Aorta (tissue), 5 donors: ENCODE measurements at regions of chr21 and their contacts with region 1.

Region 1: GRCh38 chr21:43718872-43719747 is at the start of gene PDXK:
- DNase-seq: peak; percentile 91 to 95
- ATAC-seq: peak; percentile 94
- H3K4me3 ChIP-seq: peak within 1 kb of the TSS; percentile 77 to 92
- H3K27ac ChIP-seq: peak within 1 kb of the TSS; percentile 66 to 70
- H3K4me1 ChIP-seq: no peaks in the 10 kb centered on the region
- H3K27me3 ChIP-seq: no peaks in the 10 kb centered on the region
- total RNA-seq, gene PDXK: 90.7 to 94.4 TPM

Region 2: DNA sequence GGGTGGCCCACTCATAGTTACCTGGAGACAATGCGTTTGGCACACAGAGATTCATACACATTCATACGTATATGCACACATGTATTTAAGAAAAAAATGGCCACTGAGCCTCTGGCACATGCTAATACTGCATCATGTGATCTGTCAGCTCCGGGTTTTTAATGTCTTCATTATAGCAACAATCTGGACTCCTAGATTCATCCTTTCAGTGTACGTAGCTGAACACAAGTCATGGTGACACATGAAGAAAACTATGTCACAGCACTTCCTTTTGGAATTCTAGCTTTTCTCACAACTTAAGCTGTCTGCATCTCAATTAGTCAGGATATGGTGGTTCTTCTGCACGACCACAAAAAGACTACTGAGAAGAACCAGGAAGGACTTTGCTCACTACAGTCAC is 84.5 kb before region 1 on chr21:
- intact Hi-C with region 1: no loop called
- DNase-seq: no peak
- ATAC-seq: no peak
- H3K4me3 ChIP-seq: no peak overlapping the region
- H3K27ac ChIP-seq: no peak overlapping the region
- H3K4me1 ChIP-seq: no peaks in the 10 kb centered on the region
- H3K27me3 ChIP-seq: no peaks in the 10 kb centered on the region

Region 3: DNA sequence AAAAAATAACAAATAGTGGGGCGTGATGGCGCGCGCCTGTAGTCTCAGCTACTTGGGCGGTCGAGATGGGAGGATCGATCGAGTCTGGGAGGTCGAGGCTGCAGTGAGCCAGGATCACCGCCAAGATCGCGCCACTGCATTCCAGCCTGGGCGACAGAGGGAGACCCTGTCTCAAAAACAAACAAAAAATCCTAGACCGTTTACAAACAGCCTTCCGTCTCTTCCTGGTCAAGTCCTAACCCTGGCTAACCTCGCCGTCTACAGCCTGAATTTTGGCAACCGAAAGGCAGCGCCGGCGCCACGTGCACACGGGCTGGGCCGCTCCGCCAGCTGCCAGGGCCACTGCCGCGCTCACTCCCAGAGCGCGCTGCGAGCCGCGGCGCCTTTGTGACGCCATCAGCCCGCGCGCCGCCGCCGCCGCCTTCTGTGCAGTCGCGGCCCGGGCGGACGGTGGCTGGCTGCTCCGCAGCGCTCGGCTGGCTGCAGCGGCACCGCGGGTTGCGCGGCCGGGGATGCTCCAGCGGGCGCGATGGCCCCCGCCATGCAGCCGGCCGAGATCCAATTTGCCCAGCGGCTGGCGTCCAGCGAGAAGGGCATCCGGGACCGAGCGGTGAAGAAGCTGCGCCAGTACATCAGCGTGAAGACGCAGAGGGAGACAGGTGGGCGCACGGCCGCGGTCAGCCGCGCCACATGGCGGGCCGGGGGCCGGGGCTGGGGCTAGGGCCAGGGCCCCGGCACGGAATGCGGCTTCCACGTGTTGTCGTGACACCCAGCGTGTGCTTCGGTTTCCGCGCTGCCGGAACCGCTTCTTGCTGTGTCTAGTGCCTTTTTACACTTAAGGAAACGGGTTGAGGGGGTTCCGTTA is 59.7 kb before region 1 on chr21 and contains the starts of genes HSF2BP and RRP1B:
- intact Hi-C with region 1: loop called in 1 of 2 experiments (anchors 2 kb)
- DNase-seq: peak; percentile 86 to 93
- ATAC-seq: peak; percentile 95
- H3K4me3 ChIP-seq: peak within 1 kb of the TSS; percentile 79 to 88
- H3K27ac ChIP-seq: peak within 1 kb of the TSS; percentile 62 to 64
- H3K4me1 ChIP-seq: no peaks in the 10 kb centered on the region
- H3K27me3 ChIP-seq: no peaks in the 10 kb centered on the region
- total RNA-seq, gene HSF2BP: 0.51 TPM in 1 of 2 donors, not detected in the other
- total RNA-seq, gene RRP1B: 15.9 to 16.4 TPM

Region 4: DNA sequence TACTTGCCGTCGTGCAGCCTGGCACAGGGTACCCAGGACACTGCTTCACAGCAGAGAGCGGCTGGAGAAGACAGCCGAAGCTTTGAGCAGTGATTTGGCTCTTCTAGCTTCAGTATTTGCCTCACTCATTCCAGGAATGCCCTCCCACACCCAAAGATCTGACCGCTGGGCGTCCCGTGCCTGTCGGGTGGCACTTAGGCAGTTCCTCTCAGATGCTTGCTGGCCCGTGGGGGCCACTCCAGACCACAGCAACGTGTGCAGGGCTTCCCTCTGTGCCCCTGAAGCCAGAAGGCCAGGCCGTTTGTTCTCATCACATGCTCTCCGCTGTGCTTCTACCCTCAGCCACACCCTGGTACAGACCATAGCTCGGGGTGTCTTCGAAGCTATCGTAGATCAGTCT is 42.7 kb before region 1 on chr21:
- intact Hi-C with region 1: no loop called
- DNase-seq: no peak
- ATAC-seq: no peak
- H3K4me3 ChIP-seq: no peak overlapping the region
- H3K27ac ChIP-seq: no peak overlapping the region
- H3K4me1 ChIP-seq: no peaks in the 10 kb centered on the region
- H3K27me3 ChIP-seq: no peaks in the 10 kb centered on the region

Region 5: DNA sequence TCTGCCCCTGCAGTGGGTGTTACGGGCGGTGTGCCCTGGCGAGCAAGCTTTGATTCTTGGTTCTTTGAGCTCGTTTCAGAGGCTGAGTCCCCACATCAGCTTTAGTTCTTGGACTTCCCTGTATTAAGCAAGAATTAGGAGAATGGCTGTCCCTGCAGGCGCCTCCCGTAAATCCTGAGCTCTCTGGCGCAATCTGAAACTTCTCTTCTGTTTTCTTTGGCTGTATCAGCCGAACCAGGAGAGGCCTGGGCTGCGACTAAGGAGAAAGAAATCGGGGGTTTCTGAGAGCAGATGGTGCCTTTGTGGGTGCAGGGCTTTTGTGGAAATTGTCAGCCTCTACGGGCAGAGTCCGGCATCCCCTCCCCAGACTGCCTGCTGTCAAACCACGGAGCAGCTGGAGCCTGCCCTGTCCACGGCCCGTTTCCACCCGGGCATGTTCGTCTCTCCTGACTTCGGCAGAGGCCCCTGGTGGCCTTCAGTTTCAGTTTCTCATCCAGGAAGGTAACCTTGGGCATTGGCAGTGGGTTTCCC is 39.1 kb after region 1 on chr21:
- intact Hi-C with region 1: loop called in 1 of 2 experiments (anchors 5 kb)
- DNase-seq: no peak
- ATAC-seq: peak; percentile 63
- H3K4me3 ChIP-seq: no peak overlapping the region
- H3K27ac ChIP-seq: peak overlapping the region in 1 of 2 donors; percentile 68
- H3K4me1 ChIP-seq: no peaks in the 10 kb centered on the region
- H3K27me3 ChIP-seq: no peaks in the 10 kb centered on the region